OCI-LY7 (cell line): ENCODE measurements at regions of chr10 and their contacts with region 1.

Region 1: GRCh38 chr10:9342885-9343570 is 1288.5 kb downstream of the GATA3 start:
- DNase-seq: peak; percentile 60
- H3K4me3 ChIP-seq: no peak overlapping the region
- H3K27ac ChIP-seq: no peak overlapping the region
- H3K4me1 ChIP-seq: no peaks in the 10 kb centered on the region
- CTCF ChIP-seq: peak; percentile 88

Region 2: GRCh38 chr10:9608602-9609001 is 265.6 kb after region 1 on chr10:
- CTCF ChIA-PET with region 1: no interaction called
- POLR2A ChIA-PET with region 1: no interaction called
- intact Hi-C with region 1: loop called (anchors 10 kb)
- DNase-seq: peak; percentile 2
- H3K4me3 ChIP-seq: no peak overlapping the region
- H3K27ac ChIP-seq: no peak overlapping the region
- H3K4me1 ChIP-seq: no peaks in the 10 kb centered on the region
- CTCF ChIP-seq: peak; percentile 68

Region 3: DNA sequence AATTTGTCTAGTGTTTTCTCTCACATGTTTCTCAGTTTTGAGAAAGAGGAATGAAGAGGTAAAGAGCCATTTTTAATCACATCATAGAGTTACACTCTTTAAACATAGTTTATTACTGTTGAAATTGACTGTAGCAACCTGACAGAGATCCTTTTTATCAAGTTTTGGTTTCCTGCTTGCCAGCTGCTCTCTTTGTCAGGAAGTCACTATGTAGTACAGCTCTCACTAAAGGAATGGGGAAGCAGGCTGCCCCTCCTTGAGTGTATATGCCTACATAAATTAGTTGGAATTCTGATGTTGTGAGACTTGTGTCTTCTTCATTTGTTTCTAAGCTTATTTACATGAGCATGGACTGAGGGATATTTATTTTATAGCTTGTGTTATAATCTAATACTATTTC is 400.6 kb after region 1 on chr10:
- CTCF ChIA-PET with region 1: no interaction called
- POLR2A ChIA-PET with region 1: interaction called, 3 read pairs
- intact Hi-C with region 1: loop called (anchors 5 kb)
- DNase-seq: peak; percentile 11
- H3K4me3 ChIP-seq: no peak overlapping the region
- H3K27ac ChIP-seq: no peak overlapping the region
- H3K4me1 ChIP-seq: no peaks in the 10 kb centered on the region
- CTCF ChIP-seq: no peak; the same call in 1 of the 2 replicates

Region 4: DNA sequence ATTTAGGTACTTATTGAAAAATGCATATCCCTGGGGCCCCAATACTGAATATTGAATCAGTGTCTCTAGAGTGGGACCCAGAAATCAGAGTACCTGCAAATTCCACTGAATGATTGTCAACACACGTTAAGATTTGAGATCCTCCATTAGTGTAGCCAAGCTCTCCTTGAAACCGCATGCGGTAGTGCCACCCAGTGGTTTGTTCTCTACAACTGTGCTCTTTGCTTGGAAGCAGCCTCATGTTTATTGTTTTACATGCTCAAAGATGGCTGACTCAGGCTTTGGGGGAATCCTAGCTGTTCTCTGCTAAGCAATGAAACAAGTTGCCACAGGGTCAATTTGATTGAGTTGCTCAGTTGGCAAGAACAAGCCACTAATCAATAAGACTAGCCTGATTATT is 1334.5 kb after region 1 on chr10:
- CTCF ChIA-PET with region 1: no interaction called
- POLR2A ChIA-PET with region 1: no interaction called
- intact Hi-C with region 1: loop called (anchors 10 kb)
- DNase-seq: peak; percentile 39
- H3K4me3 ChIP-seq: no peak overlapping the region
- H3K27ac ChIP-seq: no peak overlapping the region
- H3K4me1 ChIP-seq: no peaks in the 10 kb centered on the region
- CTCF ChIP-seq: peak; percentile 68